ENCODE measurements at regions of chr4 and their contacts with region 1.

Region 1: DNA sequence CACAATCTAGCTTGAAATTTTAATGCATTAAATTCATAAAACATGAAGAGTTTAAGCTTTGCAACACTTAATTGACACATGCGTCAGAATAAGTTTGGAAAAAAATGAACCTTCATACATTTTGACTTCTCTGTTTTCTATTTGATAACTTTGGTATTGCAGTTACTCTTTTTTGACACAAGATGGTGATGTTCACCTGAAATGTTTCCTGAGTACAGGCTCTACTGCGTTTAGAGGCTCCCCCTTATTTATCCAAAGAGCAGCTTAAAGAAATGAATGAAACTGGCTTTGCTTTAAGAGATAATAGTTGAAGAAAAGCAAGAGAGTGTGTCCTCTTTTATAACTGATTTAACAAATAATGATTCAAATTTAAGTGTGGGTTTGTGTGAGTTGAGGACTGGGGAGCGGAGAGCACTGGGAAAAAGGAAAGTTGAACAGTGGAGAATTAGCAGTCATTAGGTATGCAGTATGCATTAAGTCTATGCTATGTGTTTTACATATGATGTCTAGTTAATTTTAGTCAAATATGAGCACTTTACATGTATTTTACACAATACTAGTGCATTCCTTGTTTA is 180.6 kb upstream of the NUDT6 start:
- DNase-seq: peak; percentile 37 to 44 (median 42)
- ATAC-seq: peak; percentile 86
- H3K4me3 ChIP-seq: no peak overlapping the region
- H3K27ac ChIP-seq: no peak overlapping the region
- H3K4me1 ChIP-seq: peaks cover 0 to 4% of the 10 kb centered on the region in 2 experiments; a peak in 1 of 5 replicates
- H3K27me3 ChIP-seq: no peaks in the 10 kb centered on the region
- CTCF ChIP-seq: peak; percentile 30 to 64 (median 56); a peak in 4 of 6 replicates
- EP300 ChIP-seq: no peak
- POLR2A ChIP-seq: no peak
- RAD21 ChIP-seq: peak; percentile 68 to 69

Region 2: DNA sequence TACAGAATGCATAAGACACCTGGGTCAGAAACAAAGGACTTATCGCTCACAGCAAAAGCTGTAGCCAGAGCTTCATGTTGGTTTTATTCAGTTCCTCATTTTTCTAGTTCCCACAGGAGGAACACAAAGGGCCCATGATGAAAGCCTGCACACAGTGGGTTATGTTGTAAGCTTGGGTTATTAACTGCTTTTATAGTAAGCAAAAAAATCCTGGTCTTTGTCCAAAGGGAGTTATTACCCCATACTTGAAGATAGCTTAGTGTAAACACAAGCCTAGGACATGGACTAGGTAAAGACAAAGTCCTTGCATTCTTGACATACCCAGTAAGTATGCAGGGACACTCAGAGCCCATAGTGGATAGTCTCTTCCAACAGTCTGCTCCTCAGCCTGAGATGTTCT is 358.8 kb before region 1 on chr4:
- CTCF ChIA-PET with region 1: no interaction called
- POLR2A ChIA-PET with region 1: no interaction called
- in situ Hi-C with region 1: no loop called
- intact Hi-C with region 1: no loop called
- DNase-seq: no peak
- ATAC-seq: peak; percentile 32; the same call in 2 of the 3 replicates
- H3K4me3 ChIP-seq: no peak overlapping the region
- H3K27ac ChIP-seq: no peak overlapping the region
- H3K4me1 ChIP-seq: peaks cover 0 to 31% of the 10 kb centered on the region in 2 experiments; a peak in 3 of 5 replicates
- H3K27me3 ChIP-seq: no peaks in the 10 kb centered on the region
- CTCF ChIP-seq: no peak
- EP300 ChIP-seq: no peak
- POLR2A ChIP-seq: no peak
- RAD21 ChIP-seq: no peak

Region 3: GRCh38 chr4:123244137-123244536 is 141.2 kb after region 1 on chr4:
- CTCF ChIA-PET with region 1: no interaction called
- POLR2A ChIA-PET with region 1: no interaction called
- in situ Hi-C with region 1: no loop called
- intact Hi-C with region 1: loop called (anchors 5 kb)
- DNase-seq: peak in 1 of 4 experiments; percentile 5
- ATAC-seq: peak; percentile 68
- H3K4me3 ChIP-seq: no peak overlapping the region
- H3K27ac ChIP-seq: no peak overlapping the region
- H3K4me1 ChIP-seq: no peaks in the 10 kb centered on the region
- H3K27me3 ChIP-seq: no peaks in the 10 kb centered on the region
- CTCF ChIP-seq: 0 out of 6 replicates have a peak, but pooled peaks of 1 of the 3 experiments have one; percentile 7
- EP300 ChIP-seq: no peak
- POLR2A ChIP-seq: no peak
- RAD21 ChIP-seq: no peak

Region 4: GRCh38 chr4:123564758-123565346 is 461.9 kb after region 1 on chr4:
- CTCF ChIA-PET with region 1: no interaction called
- POLR2A ChIA-PET with region 1: no interaction called
- in situ Hi-C with region 1: no loop called
- intact Hi-C with region 1: loop called (anchors 10 kb)
- DNase-seq: peak; percentile 74 to 90 (median 80)
- ATAC-seq: peak; percentile 100
- H3K4me3 ChIP-seq: no peak overlapping the region
- H3K27ac ChIP-seq: no peak overlapping the region
- H3K4me1 ChIP-seq: peaks cover 0 to 3% of the 10 kb centered on the region in 2 experiments; a peak in 1 of 5 replicates
- H3K27me3 ChIP-seq: peaks cover 0 to 5% of the 10 kb centered on the region in 2 experiments; a peak in 1 of 5 replicates
- CTCF ChIP-seq: peak; percentile 95 to 100 (median 100)
- EP300 ChIP-seq: peak; percentile 67; the same call in 1 of the 2 replicates
- POLR2A ChIP-seq: no peak
- RAD21 ChIP-seq: peak; percentile 80 to 86

Region 5: DNA sequence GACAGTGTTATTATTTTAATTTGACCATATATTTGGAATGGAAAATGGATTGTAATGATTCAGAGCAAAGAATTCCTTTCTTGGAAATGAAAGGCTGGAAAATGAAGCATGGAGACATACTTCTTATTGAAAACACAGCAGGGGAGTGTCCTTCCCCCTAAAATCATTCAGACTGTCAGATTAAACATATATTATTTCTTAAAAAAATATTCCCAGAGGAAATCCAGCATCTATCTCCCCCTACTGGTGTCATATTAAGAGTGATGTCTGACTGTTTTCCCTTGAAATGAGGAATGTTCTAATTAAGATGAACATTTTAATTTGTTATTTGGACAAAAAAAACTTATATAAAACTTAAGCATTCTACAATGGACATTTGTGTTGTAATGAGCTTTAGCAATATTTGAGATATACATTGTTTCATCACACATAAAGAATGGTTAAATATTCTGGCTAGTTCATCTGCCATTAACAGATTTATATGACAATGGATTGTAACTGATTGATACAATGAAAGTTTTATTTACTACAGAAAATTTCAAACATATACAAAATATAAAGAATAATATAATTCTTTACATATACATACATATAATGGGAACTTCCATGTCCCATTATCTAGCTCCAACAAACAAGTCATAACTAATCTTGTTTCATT is 558.2 kb after region 1 on chr4:
- CTCF ChIA-PET with region 1: no interaction called
- POLR2A ChIA-PET with region 1: no interaction called
- in situ Hi-C with region 1: no loop called
- intact Hi-C with region 1: loop called (anchors 1 kb)
- DNase-seq: peak in 2 of 4 experiments; percentile 14 to 20
- ATAC-seq: no peak
- H3K4me3 ChIP-seq: no peak overlapping the region
- H3K27ac ChIP-seq: no peak overlapping the region
- H3K4me1 ChIP-seq: no peaks in the 10 kb centered on the region; a peak in 1 of 5 replicates
- H3K27me3 ChIP-seq: no peaks in the 10 kb centered on the region
- CTCF ChIP-seq: peak in 2 of 3 experiments; percentile 39 to 59; a peak in 3 of 6 replicates
- EP300 ChIP-seq: no peak
- POLR2A ChIP-seq: no peak
- RAD21 ChIP-seq: peak; percentile 30 to 62; a peak in 3 of 4 replicates

Region 6: DNA sequence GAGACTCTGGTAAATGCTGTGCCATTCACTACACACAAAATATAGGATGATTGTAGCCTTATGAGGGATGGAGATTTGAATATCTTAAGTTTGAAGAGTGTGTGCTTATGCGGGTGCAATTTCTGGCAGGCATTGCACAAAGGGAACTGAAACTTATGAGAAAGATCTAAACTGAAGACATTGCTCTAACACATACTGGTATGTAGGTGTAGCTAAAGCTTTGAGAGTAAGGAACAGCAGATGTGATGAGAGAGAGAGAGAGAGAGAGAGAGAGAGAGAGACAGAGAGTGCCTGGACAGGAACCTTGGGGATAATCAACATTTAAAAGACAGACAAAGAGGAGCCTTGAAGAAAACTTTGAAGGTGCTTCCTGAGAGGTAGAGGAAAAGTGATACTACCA is 673.3 kb after region 1 on chr4:
- CTCF ChIA-PET with region 1: no interaction called
- POLR2A ChIA-PET with region 1: no interaction called
- in situ Hi-C with region 1: no loop called
- intact Hi-C with region 1: loop called (anchors 10 kb)
- DNase-seq: no peak
- ATAC-seq: no peak
- H3K4me3 ChIP-seq: no peak overlapping the region
- H3K27ac ChIP-seq: no peak overlapping the region
- H3K4me1 ChIP-seq: no peaks in the 10 kb centered on the region
- H3K27me3 ChIP-seq: no peaks in the 10 kb centered on the region
- CTCF ChIP-seq: no peak
- EP300 ChIP-seq: no peak
- POLR2A ChIP-seq: no peak
- RAD21 ChIP-seq: no peak

Region 7: GRCh38 chr4:124262211-124263179 is 1159.5 kb after region 1 on chr4:
- CTCF ChIA-PET with region 1: interaction called, 3 read pairs
- POLR2A ChIA-PET with region 1: no interaction called
- in situ Hi-C with region 1: no loop called
- intact Hi-C with region 1: loop called (anchors 5 kb)
- DNase-seq: peak; percentile 54 to 77 (median 59)
- ATAC-seq: peak; percentile 94
- H3K4me3 ChIP-seq: no peak overlapping the region
- H3K27ac ChIP-seq: no peak overlapping the region
- H3K4me1 ChIP-seq: no peaks in the 10 kb centered on the region
- H3K27me3 ChIP-seq: no peaks in the 10 kb centered on the region
- CTCF ChIP-seq: peak; percentile 65 to 70 (median 70)
- EP300 ChIP-seq: no peak
- POLR2A ChIP-seq: no peak
- RAD21 ChIP-seq: peak; percentile 74 to 81

Region 8: DNA sequence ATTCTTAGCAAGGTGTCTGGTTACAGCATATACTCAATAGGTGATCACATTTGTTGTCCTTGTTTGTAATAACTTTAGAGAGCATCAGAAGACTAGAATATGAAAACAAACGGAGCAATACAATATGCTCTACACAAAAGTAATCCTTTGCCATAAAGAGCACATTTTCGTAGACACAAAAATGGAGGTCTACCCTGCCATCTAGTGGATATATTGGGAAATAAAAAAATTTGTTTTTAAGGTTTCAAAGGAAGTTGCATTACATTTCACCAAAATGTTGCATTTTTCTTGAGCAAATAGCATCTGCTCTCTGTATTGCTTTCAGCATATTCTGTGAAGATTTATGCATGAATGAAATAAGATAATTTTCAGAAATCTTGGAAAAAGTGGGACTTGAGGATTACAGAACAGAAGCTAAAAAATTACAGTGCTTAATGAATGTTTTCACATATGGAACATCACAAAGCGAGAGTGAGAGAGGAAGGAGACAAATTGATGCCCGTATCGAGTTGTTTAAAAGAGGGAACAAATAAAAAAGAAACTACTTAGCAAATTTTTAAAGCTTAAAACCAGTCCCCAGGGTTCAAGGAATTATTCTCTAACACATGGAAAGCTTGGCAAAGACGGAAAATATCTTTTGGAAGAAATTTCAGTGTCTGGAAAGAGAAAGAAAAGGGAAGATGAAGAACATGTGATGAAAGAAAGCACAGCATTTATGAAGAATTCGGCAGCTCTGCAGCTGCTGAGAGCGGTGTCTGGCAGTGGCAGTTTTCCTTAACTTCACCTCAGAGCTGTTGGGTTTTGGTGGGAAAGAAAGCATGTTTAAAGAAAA is 1219.5 kb after region 1 on chr4:
- CTCF ChIA-PET with region 1: no interaction called
- POLR2A ChIA-PET with region 1: no interaction called
- in situ Hi-C with region 1: no loop called
- intact Hi-C with region 1: loop called (anchors 5 kb)
- DNase-seq: peak; percentile 9 to 21 (median 17)
- ATAC-seq: peak; percentile 28; the same call in 1 of the 3 replicates
- H3K4me3 ChIP-seq: no peak overlapping the region
- H3K27ac ChIP-seq: no peak overlapping the region
- H3K4me1 ChIP-seq: no peaks in the 10 kb centered on the region
- H3K27me3 ChIP-seq: no peaks in the 10 kb centered on the region
- CTCF ChIP-seq: peak in 2 of 3 experiments; percentile 21 to 55; a peak in 4 of 6 replicates
- EP300 ChIP-seq: no peak
- POLR2A ChIP-seq: no peak
- RAD21 ChIP-seq: peak; percentile 46 to 57

Measured in K562 (cell line).